Left ventricle myocardium superior (tissue), 1 donor: ENCODE measurements at regions of chr11 and their contacts with region 1.

Region 1: DNA sequence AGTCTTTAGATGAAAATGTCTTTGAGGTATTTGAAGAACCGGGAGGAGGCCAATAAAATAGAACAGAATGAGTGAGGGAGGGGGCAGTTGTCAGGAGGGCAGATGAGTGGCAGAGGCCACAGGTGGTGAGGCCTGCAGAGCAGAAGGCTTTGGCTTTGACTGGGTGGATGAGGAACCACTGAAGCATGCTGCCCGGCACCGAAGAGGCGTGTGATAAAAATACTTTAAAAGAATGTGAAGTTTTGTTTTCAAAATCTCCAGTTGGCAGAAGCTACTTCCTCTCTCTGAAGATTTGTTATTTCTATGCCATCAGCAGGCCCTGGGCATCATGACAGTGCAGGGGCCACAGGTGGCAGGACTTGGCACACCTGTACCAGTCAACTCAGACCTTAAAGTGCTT is 6.3 kb downstream of the MS4A12 start:
- DNase-seq: no peak
- ATAC-seq: peak; percentile 37

Region 2: DNA sequence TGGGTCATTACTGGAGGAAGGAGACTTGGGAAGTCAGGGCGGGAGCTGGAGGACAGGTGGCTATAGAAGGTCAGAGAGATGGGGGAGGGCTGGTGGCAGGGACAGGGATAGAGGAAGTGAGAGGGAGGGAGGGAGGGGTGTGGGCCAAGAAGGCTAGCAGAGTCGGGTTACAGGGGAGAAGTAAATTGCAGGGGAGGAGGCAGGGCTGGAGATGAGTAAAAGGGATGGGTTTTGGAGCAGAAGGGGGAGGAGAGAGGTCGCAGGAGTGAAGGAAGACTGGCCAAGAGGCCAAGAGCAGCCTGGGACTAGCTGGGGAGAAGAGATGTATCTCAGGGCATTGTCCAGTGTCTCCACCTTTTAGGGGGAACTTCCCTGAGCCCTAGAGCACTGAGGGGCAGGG is 1042.7 kb after region 1 on chr11:
- intact Hi-C with region 1: loop called (anchors 10 kb)
- DNase-seq: no peak
- ATAC-seq: peak; percentile 8